ENCODE measurements at regions of chr1 and their contacts with region 1.

Region 1: GRCh38 chr1:15272009-15272788 is 25.2 kb downstream of the FHAD1 start:
- DNase-seq: peak; percentile 66
- ATAC-seq: peak; percentile 82
- H3K4me3 Mint-ChIP-seq: no peak overlapping the region
- H3K27ac Mint-ChIP-seq: no peak overlapping the region
- H3K4me1 Mint-ChIP-seq: peaks cover 6% of the 10 kb centered on the region
- H3K27me3 Mint-ChIP-seq: peaks cover 30% of the 10 kb centered on the region

Region 2: DNA sequence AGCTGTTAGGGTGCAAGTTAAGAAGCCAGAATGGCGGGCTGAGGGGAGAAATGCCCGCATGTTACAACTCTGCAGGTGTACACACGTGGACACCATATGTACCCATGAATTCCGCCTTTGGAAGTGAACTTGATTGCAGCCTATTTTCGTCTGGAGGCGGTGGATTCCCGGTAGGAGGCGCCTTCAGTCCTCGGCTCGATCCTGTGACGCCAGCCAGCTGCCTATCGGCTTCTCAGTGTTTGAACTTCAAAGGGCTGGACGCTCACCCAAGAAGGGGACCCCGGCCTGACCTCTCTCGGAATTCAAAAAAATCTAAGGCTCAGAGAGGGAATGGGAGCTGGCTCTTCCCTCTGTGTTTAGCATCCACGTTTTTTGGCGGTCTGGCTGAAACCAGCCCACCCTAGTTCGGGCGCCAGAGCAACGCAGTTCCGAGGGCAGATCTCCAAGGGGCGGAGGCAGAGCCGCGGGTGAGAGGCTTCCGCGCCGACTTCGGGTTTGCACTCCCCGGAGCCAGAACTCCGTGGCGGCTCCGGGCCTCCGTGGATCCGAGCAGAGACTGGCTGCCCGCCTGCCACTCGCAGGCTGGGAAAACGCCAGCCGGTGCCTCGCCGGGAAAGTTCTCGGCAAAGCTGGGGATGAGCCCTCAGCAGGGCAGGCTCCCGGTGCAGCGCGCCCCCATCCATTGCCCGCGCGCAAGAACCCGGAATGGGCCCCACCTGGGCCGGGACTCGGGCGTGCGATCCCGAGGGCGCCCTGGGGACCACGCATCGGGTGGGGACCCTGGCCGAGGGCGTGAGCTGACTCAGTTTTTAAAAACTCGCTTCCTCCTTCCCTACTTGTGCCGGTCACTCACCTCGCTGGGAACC is 119.6 kb before region 1 on chr1:
- CTCF ChIA-PET with region 1: interaction called, 12 read pairs
- POLR2A ChIA-PET with region 1: no interaction called
- DNase-seq: peak; percentile 37
- ATAC-seq: no peak
- H3K4me3 Mint-ChIP-seq: peak overlapping the region; percentile 48
- H3K27ac Mint-ChIP-seq: no peak overlapping the region
- H3K4me1 Mint-ChIP-seq: peaks cover 33% of the 10 kb centered on the region
- H3K27me3 Mint-ChIP-seq: peaks cover 57% of the 10 kb centered on the region